ENCODE measurements at regions of chr5 and their contacts with region 1.

Region 1: GRCh38 chr5:72860499-72860898 is 44.0 kb downstream of the TNPO1 start:
- DNase-seq: no peak
- H3K4me3 ChIP-seq: no peak overlapping the region
- H3K27ac ChIP-seq: no peak overlapping the region
- H3K4me1 ChIP-seq: no peaks in the 10 kb centered on the region
- H3K27me3 ChIP-seq: no peaks in the 10 kb centered on the region
- CTCF ChIP-seq: no peak

Region 2: DNA sequence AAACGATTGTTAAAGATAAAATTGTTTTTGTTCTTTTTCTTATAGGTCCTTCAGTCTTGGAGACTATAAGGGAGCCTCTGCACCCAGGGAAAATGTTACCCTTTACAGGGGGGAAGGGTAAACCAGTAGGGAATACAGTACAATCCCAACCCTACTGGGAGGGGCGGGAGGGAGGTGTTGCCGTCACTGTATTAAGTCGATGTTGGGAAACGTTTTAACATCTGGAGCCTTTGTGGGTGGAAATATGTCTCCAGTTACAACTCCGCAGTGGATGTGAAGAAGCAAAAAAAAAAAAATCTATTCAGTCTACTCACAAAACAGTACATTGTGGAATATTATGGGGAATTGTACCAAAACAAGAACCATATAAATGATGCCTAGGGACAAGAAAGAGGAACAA is 48.2 kb after region 1 on chr5:
- CTCF ChIA-PET with region 1: no interaction called
- dilution Hi-C with region 1: no loop called
- in situ Hi-C with region 1: no loop called
- intact Hi-C with region 1: loop called (anchors 5 kb)
- DNase-seq: no peak
- H3K4me3 ChIP-seq: no peak overlapping the region
- H3K27ac ChIP-seq: no peak overlapping the region
- H3K4me1 ChIP-seq: no peaks in the 10 kb centered on the region
- H3K27me3 ChIP-seq: no peaks in the 10 kb centered on the region
- CTCF ChIP-seq: no peak